ENCODE measurements at regions of chr6 and their contacts with region 1.

Region 1: GRCh38 chr6:137780447-137781034 is 86.5 kb upstream of the TNFAIP3 start:
- DNase-seq: no peak
- H3K4me3 Mint-ChIP-seq: no peak overlapping the region
- H3K27ac Mint-ChIP-seq: no peak overlapping the region
- H3K4me1 Mint-ChIP-seq: peaks cover 4% of the 10 kb centered on the region
- H3K27me3 Mint-ChIP-seq: peaks cover 2% of the 10 kb centered on the region

Region 2: GRCh38 chr6:137744877-137745276 is 35.7 kb before region 1 on chr6:
- CTCF ChIA-PET with region 1: no interaction called
- POLR2A ChIA-PET with region 1: no interaction called
- intact Hi-C with region 1: loop called (anchors 5 kb)
- DNase-seq: no peak
- H3K4me3 Mint-ChIP-seq: no peak overlapping the region
- H3K27ac Mint-ChIP-seq: no peak overlapping the region
- H3K4me1 Mint-ChIP-seq: peaks cover 5% of the 10 kb centered on the region
- H3K27me3 Mint-ChIP-seq: no peaks in the 10 kb centered on the region

Measured in activated CD4-positive, alpha-beta memory T cell treated with anti-CD3 and anti-CD28 coated beads for 36 hours (primary cell).